ENCODE measurements at regions of chr12 and their contacts with region 1.

Region 1: GRCh38 chr12:74537707-74538385 is at the start of gene ATXN7L3B:
- DNase-seq: peak; percentile 94
- H3K4me3 ChIP-seq: peak within 1 kb of the TSS; percentile 86
- H3K4me3 Mint-ChIP-seq: peak within 1 kb of the TSS; percentile 98
- H3K27ac Mint-ChIP-seq: peak within 1 kb of the TSS; percentile 99
- H3K4me1 ChIP-seq: peaks cover 7% of the 10 kb centered on the region; the same call in 1 of the 2 replicates
- H3K4me1 Mint-ChIP-seq: peaks cover 18% of the 10 kb centered on the region
- H3K27me3 ChIP-seq: no peaks in the 10 kb centered on the region
- H3K27me3 Mint-ChIP-seq: no peaks in the 10 kb centered on the region
- CTCF ChIP-seq: no peak
- total RNA-seq, gene ATXN7L3B: 29.3 and 30.6 TPM in 2 replicates

Region 2: DNA sequence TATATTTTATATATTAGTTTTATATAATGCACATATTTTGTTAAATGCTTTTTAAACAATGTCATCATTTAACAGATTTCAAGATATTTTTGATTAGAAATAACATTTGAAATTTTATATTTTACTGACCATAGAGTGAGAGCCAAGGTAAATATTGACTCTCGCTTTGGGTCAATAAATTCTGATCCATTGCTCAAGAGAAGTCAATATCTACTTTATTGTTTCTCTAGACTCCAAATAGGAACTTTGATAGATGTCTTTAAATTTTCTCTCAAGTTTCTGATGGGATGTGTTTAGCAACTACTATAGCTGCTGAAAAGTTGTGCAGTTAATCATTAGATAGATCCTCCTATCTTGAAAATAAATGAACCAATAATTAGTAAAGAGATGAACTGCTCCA is 61.6 kb before region 1 on chr12:
- CTCF ChIA-PET with region 1: no interaction called
- POLR2A ChIA-PET with region 1: no interaction called
- intact Hi-C with region 1: loop called (anchors 5 kb)
- DNase-seq: no peak
- H3K4me3 ChIP-seq: no peak overlapping the region
- H3K4me3 Mint-ChIP-seq: no peak overlapping the region
- H3K27ac Mint-ChIP-seq: no peak overlapping the region
- H3K4me1 ChIP-seq: no peaks in the 10 kb centered on the region
- H3K4me1 Mint-ChIP-seq: no peaks in the 10 kb centered on the region
- H3K27me3 ChIP-seq: no peaks in the 10 kb centered on the region
- H3K27me3 Mint-ChIP-seq: no peaks in the 10 kb centered on the region
- CTCF ChIP-seq: no peak

Region 3: DNA sequence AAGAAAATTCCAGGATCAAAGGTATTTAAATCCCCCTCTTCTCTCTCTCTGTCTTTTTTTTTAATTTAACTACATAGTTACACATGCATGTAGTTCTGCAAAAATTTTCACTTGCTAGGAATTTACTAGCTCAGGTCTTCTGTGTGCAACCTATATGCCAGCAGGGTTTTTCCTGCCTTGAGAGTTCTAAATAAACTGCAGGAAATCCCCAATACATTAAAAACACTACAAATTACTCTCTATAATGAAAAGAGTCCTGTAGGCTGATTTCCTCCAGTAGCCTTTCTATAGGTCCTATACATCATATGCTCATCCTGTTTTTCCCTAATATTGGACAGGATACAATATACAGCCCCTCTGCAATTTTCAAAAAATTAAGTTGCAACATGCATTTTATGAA is 28.0 kb before region 1 on chr12:
- CTCF ChIA-PET with region 1: no interaction called
- POLR2A ChIA-PET with region 1: interaction called, 4 read pairs
- intact Hi-C with region 1: loop called (anchors 1 kb)
- DNase-seq: no peak
- H3K4me3 ChIP-seq: no peak overlapping the region
- H3K4me3 Mint-ChIP-seq: peak overlapping the region; percentile 92
- H3K27ac Mint-ChIP-seq: peak overlapping the region; percentile 95
- H3K4me1 ChIP-seq: no peaks in the 10 kb centered on the region
- H3K4me1 Mint-ChIP-seq: peaks cover 6% of the 10 kb centered on the region
- H3K27me3 ChIP-seq: no peaks in the 10 kb centered on the region
- H3K27me3 Mint-ChIP-seq: no peaks in the 10 kb centered on the region
- CTCF ChIP-seq: no peak

Region 4: DNA sequence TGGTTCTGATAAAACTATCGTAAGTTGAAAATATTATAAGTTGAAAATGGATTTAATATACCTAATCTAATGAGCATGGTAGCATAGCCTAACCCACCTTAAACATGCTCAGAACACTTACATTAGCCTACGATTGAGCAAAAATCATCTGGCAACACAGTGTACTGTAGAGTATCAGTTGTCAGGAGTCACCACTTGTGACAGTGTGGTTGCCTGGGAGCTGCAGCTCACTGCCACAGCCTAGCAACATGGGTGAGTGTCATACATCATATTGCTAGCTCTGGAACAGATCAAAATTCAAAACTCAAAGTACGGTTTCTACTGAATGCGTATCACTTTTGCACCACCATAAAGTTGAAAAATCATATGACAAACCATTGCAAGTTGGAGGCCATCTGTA is 203.3 kb after region 1 on chr12:
- CTCF ChIA-PET with region 1: no interaction called
- POLR2A ChIA-PET with region 1: no interaction called
- intact Hi-C with region 1: no loop called
- DNase-seq: no peak
- H3K4me3 ChIP-seq: no peak overlapping the region
- H3K4me3 Mint-ChIP-seq: no peak overlapping the region
- H3K27ac Mint-ChIP-seq: no peak overlapping the region
- H3K4me1 ChIP-seq: no peaks in the 10 kb centered on the region
- H3K4me1 Mint-ChIP-seq: no peaks in the 10 kb centered on the region
- H3K27me3 ChIP-seq: no peaks in the 10 kb centered on the region
- H3K27me3 Mint-ChIP-seq: no peaks in the 10 kb centered on the region
- CTCF ChIP-seq: no peak

Measured in Caco-2 (cell line).